ENCODE measurements at regions of chr19 and their contacts with region 1.

Region 1: DNA sequence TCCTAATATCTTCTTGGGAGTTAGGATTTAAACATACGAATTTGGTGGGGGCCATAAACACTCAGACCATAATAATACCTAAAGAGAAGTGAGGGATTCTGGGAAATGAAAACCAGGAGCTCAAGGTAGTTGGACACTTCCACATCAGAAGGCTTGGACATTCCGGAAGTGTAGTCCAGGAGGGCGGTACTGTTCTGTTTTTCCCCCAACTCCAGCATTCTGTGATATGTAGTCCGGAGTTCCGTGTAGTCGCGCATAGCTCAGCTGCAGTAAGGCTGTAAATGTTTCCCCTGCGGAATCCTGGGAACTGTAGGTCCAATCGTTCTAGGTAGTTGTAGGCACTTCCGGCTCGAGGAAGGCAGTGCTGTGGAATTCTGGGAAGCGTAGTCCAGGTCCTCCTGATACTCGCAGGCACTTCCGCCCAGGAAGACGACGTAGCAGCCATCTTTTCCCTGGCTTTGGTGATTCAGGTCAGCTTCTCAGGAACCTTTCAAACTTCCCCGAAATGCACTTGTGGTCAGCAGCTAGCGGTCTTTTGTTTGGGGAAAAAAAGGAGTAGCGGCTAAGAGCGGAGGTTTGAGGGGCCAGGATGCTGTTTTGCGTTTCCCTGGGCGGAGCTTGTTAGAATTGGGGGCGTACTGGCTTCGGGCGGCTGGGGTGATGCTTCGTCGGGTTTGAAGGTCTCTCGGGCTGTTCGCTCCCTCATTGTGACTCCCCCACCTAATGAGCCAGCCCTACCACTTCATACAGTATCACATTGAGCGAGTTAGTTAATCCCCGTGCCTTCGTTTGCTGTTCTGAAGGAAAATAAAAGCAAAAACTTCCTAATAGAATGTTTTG is at the start of gene ZNF226:
- DNase-seq: peak; percentile 71
- ATAC-seq: peak; percentile 85
- H3K4me3 Mint-ChIP-seq: peak within 1 kb of the TSS; percentile 91
- H3K27ac Mint-ChIP-seq: peak within 1 kb of the TSS; percentile 86
- H3K4me1 Mint-ChIP-seq: peaks cover 22% of the 10 kb centered on the region
- H3K27me3 Mint-ChIP-seq: no peaks in the 10 kb centered on the region
- total RNA-seq, gene ZNF226: 26.2 to 28.0 TPM

Region 2: GRCh38 chr19:44500148-44500956 is 335.5 kb after region 1 on chr19 and contains the start of gene ZNF180:
- POLR2A ChIA-PET with region 1: interaction called, 10 read pairs
- DNase-seq: peak; percentile 97
- ATAC-seq: peak; percentile 92
- H3K4me3 Mint-ChIP-seq: peak within 1 kb of the TSS; percentile 98
- H3K27ac Mint-ChIP-seq: peak within 1 kb of the TSS; percentile 93
- H3K4me1 Mint-ChIP-seq: peaks cover 24% of the 10 kb centered on the region
- H3K27me3 Mint-ChIP-seq: peaks cover 5% of the 10 kb centered on the region
- total RNA-seq, gene ZNF180: 15.4 to 16.4 TPM

Measured in activated naive CD8-positive, alpha-beta T cell treated with anti-CD3 and anti-CD28 coated beads, Interleukin-2, amount 10 ng/mL, durations not matched to agents 7 days and 5 days (primary cell).